Gastrocnemius medialis (tissue), 4 donors: ENCODE measurements at regions of chr3 and their contacts with region 1.

Region 1: DNA sequence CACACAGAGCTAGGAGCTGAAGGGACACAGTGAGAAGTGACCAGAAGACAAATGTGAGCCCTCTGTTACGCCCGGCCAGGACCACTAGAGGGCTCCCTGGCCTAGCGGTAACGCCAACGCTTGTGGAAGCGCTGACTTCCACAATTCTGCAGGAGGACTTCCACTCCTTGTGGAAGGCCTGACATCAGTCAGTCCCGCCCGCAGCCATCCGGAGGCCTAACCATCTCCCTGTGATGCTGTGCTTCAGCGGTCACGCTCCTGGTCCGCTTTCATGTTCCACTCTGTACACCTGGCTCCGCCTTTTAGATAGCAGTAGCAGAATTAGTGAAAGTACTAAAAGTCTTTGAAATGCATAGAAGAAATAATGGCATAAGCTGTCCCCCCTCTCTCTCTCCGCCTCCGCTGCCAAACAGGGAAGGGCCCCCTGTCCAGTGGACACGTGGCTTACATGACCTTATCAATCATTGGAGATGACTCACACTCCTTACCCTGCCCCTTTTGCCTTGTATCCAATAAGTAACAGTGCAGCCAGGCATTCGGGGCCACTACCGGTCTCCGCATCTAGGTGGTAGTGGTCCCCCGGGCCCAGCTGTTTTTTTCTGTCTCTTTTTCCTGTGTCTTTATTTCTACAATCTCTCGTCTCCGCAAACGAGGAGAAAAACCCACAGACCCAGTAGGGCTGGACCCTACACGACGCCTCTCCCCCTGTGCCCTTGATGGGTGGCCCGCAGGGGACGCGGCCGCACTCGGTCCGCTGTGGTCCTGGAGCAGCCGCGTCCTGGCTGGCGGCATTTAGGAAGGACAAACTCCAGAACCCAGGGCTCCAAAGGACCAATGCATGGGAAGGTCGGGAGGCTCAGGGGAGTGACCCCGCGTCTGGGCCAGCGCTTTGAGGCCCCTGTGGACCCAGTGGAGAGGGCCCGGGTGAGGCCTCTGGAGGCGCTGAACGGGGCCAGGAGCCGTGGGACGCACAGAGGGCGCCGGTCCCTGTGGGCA is 27.0 kb upstream of the RPL32 start:
- DNase-seq: peak; percentile 74 to 82
- ATAC-seq: peak; percentile 78 to 79
- H3K4me3 ChIP-seq: no peak overlapping the region
- H3K27ac ChIP-seq: no peak overlapping the region
- H3K4me1 ChIP-seq: peaks cover 21 to 28% of the 10 kb centered on the region in 2 donors
- H3K27me3 ChIP-seq: no peaks in the 10 kb centered on the region
- CTCF ChIP-seq: peak; percentile 82 to 94 (median 92)
- POLR2A ChIP-seq: no peak

Region 2: DNA sequence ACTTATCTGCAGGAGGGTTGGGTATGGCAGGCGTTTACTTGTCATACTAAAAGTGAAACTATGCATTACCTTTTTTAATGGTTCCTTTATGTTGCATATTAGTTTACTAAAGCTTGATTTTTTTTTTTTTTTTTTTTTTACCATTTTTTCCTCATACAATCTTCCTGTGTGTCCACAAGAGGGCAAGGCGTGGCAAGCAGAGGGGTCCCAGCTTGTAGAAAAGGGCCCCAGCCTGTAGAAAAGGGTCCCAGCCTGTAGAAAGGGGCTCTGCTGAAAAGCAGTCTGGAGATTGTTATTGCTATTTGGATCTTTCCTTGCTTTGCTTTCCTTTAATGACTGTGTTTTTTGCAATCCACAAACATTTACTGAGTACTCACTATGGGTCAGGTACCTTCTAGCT is 289.6 kb before region 1 on chr3:
- in situ Hi-C with region 1: no loop called
- intact Hi-C with region 1: no loop called
- DNase-seq: no peak
- ATAC-seq: no peak
- H3K4me3 ChIP-seq: no peak overlapping the region
- H3K27ac ChIP-seq: no peak overlapping the region
- H3K4me1 ChIP-seq: no peaks in the 10 kb centered on the region
- H3K27me3 ChIP-seq: no peaks in the 10 kb centered on the region
- CTCF ChIP-seq: peak in 1 of 5 experiments; percentile 12
- POLR2A ChIP-seq: no peak

Region 3: GRCh38 chr3:12891985-12892839 is 23.9 kb after region 1 on chr3:
- in situ Hi-C with region 1: no loop called
- intact Hi-C with region 1: loop called (anchors 1 kb)
- DNase-seq: peak; percentile 46 to 56
- ATAC-seq: peak in 1 of 2 donors; percentile 76
- H3K4me3 ChIP-seq: peak overlapping the region in 3 of 4 donors; percentile 18 to 33 (median 30)
- H3K27ac ChIP-seq: no peak overlapping the region
- H3K4me1 ChIP-seq: peaks cover 20 to 24% of the 10 kb centered on the region in 2 donors
- H3K27me3 ChIP-seq: no peaks in the 10 kb centered on the region
- CTCF ChIP-seq: peak; percentile 79 to 94 (median 87)
- POLR2A ChIP-seq: no peak